Esophagus muscularis mucosa (tissue), 4 donors: ENCODE measurements at regions of chr22 and their contacts with region 1.

Region 1: GRCh38 chr22:20507253-20508066 is at the start of gene MED15:
- DNase-seq: peak; percentile 97
- H3K4me3 ChIP-seq: peak within 1 kb of the TSS; percentile 73 to 98 (median 86)
- H3K27ac ChIP-seq: peak within 1 kb of the TSS; percentile 95 to 99 (median 96)
- H3K4me1 ChIP-seq: peaks cover 42 to 51% (median 51%) of the 10 kb centered on the region in 4 donors
- H3K27me3 ChIP-seq: no peaks in the 10 kb centered on the region
- CTCF ChIP-seq: peak in 1 of 3 experiments; percentile 32
- EP300 ChIP-seq: no peak
- POLR2A ChIP-seq: peak; percentile 93
- total RNA-seq, gene MED15: 34.0 to 54.1 (median 38.9) TPM

Region 2: DNA sequence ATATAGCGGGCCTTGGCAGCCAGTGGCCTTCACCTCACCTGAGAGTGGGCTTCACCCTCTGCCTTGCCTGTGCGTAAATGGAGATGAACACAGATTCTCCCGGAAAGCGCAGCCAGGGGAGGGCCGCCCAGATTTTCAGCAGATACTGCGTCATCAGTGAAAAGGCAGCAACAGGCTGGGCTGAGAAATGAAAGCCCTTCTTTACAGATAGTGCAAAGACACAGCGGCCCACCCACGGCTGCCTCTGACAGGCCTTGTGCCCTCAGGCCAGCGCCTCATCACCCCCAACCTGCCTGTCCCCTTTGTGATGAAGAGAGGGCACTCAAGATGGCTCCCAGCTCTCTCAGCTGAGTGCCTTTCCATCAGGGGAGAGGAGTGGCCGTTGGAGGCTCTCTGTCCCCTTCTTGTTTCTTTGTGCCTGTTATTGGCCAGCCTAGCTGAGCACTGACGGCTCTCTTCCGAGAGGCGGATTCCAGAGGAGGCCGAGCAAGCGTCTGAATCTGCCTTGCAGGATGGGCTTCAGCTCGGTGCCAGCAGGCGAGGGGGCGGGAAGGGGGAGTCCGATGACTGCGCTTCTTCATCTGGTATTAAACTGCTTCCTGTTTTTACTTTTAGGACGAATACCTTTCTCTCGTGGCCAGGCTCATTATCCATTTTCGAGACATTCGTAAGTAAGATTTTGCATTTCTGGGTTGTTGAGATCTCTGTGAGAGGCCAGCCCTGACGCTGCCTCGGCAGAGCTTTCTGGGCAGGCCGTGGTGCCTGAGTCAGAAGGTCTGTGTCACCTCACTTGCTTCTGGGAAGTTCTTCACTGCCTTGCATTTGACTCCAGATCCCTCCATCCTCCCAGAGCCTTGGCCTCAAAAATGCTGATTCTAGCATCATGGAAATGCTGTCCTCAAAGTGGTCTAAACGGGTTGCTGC is 43.6 kb after region 1 on chr22:
- intact Hi-C with region 1: loop called (anchors 5 kb)
- DNase-seq: no peak
- H3K4me3 ChIP-seq: peak overlapping the region in 3 of 4 donors; percentile 1 to 14 (median 11)
- H3K27ac ChIP-seq: peak overlapping the region; percentile 77 to 85 (median 82)
- H3K4me1 ChIP-seq: peaks cover 63 to 79% (median 74%) of the 10 kb centered on the region in 4 donors
- H3K27me3 ChIP-seq: no peaks in the 10 kb centered on the region
- CTCF ChIP-seq: no peak
- EP300 ChIP-seq: no peak
- POLR2A ChIP-seq: no peak

Region 3: GRCh38 chr22:20568989-20569769 is 61.7 kb after region 1 on chr22:
- intact Hi-C with region 1: loop called (anchors 5 kb)
- DNase-seq: peak; percentile 96
- H3K4me3 ChIP-seq: no peak overlapping the region
- H3K27ac ChIP-seq: peak overlapping the region; percentile 74 to 83 (median 80)
- H3K4me1 ChIP-seq: peaks cover 29 to 58% (median 52%) of the 10 kb centered on the region in 4 donors
- H3K27me3 ChIP-seq: no peaks in the 10 kb centered on the region
- CTCF ChIP-seq: no peak
- EP300 ChIP-seq: no peak
- POLR2A ChIP-seq: no peak

Region 4: DNA sequence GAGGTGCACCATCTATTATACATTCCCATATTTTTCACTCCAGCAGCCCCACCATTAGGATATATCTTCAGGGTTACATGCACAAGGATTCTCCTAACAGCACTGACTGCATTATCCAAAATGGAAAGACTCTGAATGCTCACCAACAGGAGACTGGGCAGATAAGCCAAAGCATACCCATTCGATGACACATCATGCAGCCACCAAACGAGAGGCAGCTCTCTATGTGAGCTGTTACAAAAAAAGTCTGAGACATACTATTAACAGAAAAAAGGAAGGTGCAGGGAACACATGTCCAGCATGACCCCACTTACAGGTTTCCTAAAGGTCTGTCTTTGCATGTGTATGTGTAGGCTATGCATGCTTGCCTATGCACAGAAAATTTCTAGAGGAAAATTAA is 254.1 kb after region 1 on chr22:
- intact Hi-C with region 1: no loop called
- DNase-seq: no peak
- H3K4me3 ChIP-seq: no peak overlapping the region
- H3K27ac ChIP-seq: no peak overlapping the region
- H3K4me1 ChIP-seq: no peaks in the 10 kb centered on the region
- H3K27me3 ChIP-seq: no peaks in the 10 kb centered on the region
- CTCF ChIP-seq: no peak
- EP300 ChIP-seq: no peak
- POLR2A ChIP-seq: no peak